Naive thymus-derived CD4-positive, alpha-beta T cell (primary cell): ENCODE measurements at regions of chr10 and their contacts with region 1.

Region 1: GRCh38 chr10:79195091-79195923 is 126.5 kb downstream of the ZMIZ1 start:
- DNase-seq: peak; percentile 49 to 80 (median 74)
- ATAC-seq: peak; percentile 89
- H3K4me3 ChIP-seq: no peak overlapping the region
- H3K4me3 Mint-ChIP-seq: no peak overlapping the region
- H3K27ac ChIP-seq: no peak overlapping the region
- H3K27ac Mint-ChIP-seq: no peak overlapping the region
- H3K4me1 ChIP-seq: peaks cover 0 to 3% of the 10 kb centered on the region in 2 donors
- H3K4me1 Mint-ChIP-seq: peaks cover 0 to 10% (median 5%) of the 10 kb centered on the region in 7 donors
- H3K27me3 ChIP-seq: no peaks in the 10 kb centered on the region
- H3K27me3 Mint-ChIP-seq: no peaks in the 10 kb centered on the region

Region 2: DNA sequence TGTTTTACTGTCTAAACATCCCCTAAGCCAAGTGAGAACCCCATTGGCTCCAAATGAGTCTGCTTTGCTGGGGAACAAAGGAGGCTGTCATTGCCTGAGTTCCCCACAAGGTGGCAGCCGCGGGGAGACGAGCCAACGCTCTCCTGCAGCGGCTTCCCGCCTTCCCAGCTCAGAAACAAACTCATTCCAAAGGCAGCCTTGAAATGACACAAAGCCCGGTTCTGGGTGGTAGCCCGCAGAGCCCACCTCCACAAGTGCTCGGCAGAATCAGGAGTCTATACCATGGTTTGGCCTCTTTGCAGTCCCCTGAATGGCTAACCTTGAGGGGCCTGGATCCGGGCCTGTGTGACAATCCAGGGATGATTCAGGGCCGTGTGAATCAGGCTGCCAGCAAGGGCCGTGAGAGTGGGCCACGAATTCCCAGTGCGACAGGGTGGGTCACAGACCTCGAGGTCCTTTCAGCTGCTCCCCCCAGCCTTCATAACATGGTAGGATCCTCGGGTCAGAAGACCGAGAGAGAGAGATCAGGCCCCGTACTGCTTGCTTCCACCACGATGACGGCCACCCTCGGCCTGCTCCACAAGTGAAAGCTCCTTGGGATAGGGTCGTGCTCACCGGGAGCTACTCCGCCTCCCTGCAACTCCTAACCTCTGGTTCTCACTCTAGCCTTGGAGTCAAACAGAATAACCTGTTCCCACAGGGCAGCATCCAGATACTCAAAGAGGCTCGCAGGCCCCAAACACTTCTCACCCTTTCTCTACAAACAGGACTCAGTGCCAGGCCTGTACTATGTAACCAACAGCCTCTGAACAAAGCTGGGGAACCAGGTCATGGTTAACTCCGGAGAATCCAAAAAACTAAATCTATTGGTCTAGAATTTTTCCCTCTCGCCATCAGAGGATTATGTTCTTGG is 1348.3 kb before region 1 on chr10:
- CTCF ChIA-PET with region 1: no interaction called
- POLR2A ChIA-PET with region 1: no interaction called
- intact Hi-C with region 1: loop called in 1 of 2 experiments (anchors 10 kb)
- DNase-seq: peak; percentile 14 to 71 (median 42)
- ATAC-seq: peak; percentile 83
- H3K4me3 ChIP-seq: no peak overlapping the region
- H3K4me3 Mint-ChIP-seq: no peak overlapping the region
- H3K27ac ChIP-seq: no peak overlapping the region
- H3K27ac Mint-ChIP-seq: no peak overlapping the region
- H3K4me1 ChIP-seq: no peaks in the 10 kb centered on the region
- H3K4me1 Mint-ChIP-seq: peaks cover 0 to 8% (median 0%) of the 10 kb centered on the region in 7 donors
- H3K27me3 ChIP-seq: no peaks in the 10 kb centered on the region
- H3K27me3 Mint-ChIP-seq: no peaks in the 10 kb centered on the region

Region 3: GRCh38 chr10:78211561-78212051 is 983.7 kb before region 1 on chr10:
- CTCF ChIA-PET with region 1: interaction called, 3 read pairs
- POLR2A ChIA-PET with region 1: no interaction called
- intact Hi-C with region 1: loop called in 1 of 2 experiments (anchors 1 kb)
- DNase-seq: peak in 1 of 9 donors; percentile 12
- ATAC-seq: no peak
- H3K4me3 ChIP-seq: no peak overlapping the region
- H3K4me3 Mint-ChIP-seq: no peak overlapping the region
- H3K27ac ChIP-seq: no peak overlapping the region
- H3K27ac Mint-ChIP-seq: no peak overlapping the region
- H3K4me1 ChIP-seq: no peaks in the 10 kb centered on the region
- H3K4me1 Mint-ChIP-seq: peaks cover 0 to 2% (median 0%) of the 10 kb centered on the region in 7 donors
- H3K27me3 ChIP-seq: no peaks in the 10 kb centered on the region
- H3K27me3 Mint-ChIP-seq: peaks cover 9 to 19% (median 15%) of the 10 kb centered on the region in 5 donors

Region 4: GRCh38 chr10:78424719-78425118 is 770.6 kb before region 1 on chr10:
- CTCF ChIA-PET with region 1: no interaction called
- POLR2A ChIA-PET with region 1: no interaction called
- intact Hi-C with region 1: loop called in 1 of 2 experiments (anchors 2 kb)
- DNase-seq: no peak
- ATAC-seq: no peak
- H3K4me3 ChIP-seq: no peak overlapping the region
- H3K4me3 Mint-ChIP-seq: no peak overlapping the region
- H3K27ac ChIP-seq: no peak overlapping the region
- H3K27ac Mint-ChIP-seq: no peak overlapping the region
- H3K4me1 ChIP-seq: no peaks in the 10 kb centered on the region
- H3K4me1 Mint-ChIP-seq: peaks cover 0 to 10% (median 0%) of the 10 kb centered on the region in 7 donors
- H3K27me3 ChIP-seq: no peaks in the 10 kb centered on the region
- H3K27me3 Mint-ChIP-seq: peaks cover 4 to 29% (median 16%) of the 10 kb centered on the region in 5 donors

Region 5: DNA sequence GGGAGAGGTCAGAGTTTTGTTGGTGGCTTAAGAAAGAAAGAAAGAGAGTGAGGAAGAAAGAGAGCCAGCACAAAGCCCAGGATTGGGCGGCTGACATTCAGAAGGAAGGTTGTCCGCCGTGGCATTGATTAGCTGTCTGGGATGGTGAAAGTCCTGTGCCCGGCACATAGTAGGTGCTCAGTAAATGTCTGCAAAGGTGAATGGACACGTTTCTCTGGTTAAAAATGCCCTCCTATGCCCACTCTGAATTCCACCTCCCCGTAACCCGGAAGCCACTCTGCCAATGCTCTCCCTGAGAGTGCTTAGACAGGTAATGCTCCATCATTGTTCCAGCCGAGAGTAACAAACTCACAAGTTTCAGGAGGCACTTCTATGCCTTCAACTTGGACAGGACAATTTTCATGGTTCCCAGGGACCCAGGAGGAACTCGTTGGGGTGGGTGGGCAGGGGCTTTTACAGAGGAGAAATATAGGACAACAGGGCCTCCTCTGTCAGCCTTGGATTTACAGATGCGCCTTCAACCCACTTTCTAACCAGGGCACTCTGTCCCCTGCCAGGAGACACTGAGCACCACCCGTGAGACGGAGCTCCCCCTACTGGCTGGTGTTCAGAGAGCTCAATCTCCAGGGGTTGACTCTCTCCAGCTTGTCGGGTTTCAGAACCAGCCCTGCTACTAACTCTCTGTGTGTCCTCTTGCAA is 538.0 kb before region 1 on chr10:
- CTCF ChIA-PET with region 1: interaction called, 3 read pairs
- POLR2A ChIA-PET with region 1: no interaction called
- intact Hi-C with region 1: loop called (anchors 1 to 2 kb)
- DNase-seq: peak; percentile 12 to 70 (median 53)
- ATAC-seq: peak; percentile 85
- H3K4me3 ChIP-seq: no peak overlapping the region
- H3K4me3 Mint-ChIP-seq: no peak overlapping the region
- H3K27ac ChIP-seq: no peak overlapping the region
- H3K27ac Mint-ChIP-seq: no peak overlapping the region
- H3K4me1 ChIP-seq: no peaks in the 10 kb centered on the region
- H3K4me1 Mint-ChIP-seq: peaks cover 0 to 1% (median 0%) of the 10 kb centered on the region in 7 donors
- H3K27me3 ChIP-seq: no peaks in the 10 kb centered on the region
- H3K27me3 Mint-ChIP-seq: peaks cover 7 to 25% (median 10%) of the 10 kb centered on the region in 5 donors

Region 6: GRCh38 chr10:78937800-78938694 is 257.3 kb before region 1 on chr10:
- CTCF ChIA-PET with region 1: interaction called, 6 read pairs
- POLR2A ChIA-PET with region 1: no interaction called
- intact Hi-C with region 1: loop called (anchors 1 to 5 kb)
- DNase-seq: peak in 2 of 9 donors; percentile 12 to 24
- ATAC-seq: peak; percentile 39
- H3K4me3 ChIP-seq: no peak overlapping the region
- H3K4me3 Mint-ChIP-seq: no peak overlapping the region
- H3K27ac ChIP-seq: no peak overlapping the region
- H3K27ac Mint-ChIP-seq: peak overlapping the region in 2 of 9 donors; percentile 54 to 72
- H3K4me1 ChIP-seq: no peaks in the 10 kb centered on the region
- H3K4me1 Mint-ChIP-seq: peaks cover 0 to 2% (median 0%) of the 10 kb centered on the region in 7 donors
- H3K27me3 ChIP-seq: no peaks in the 10 kb centered on the region
- H3K27me3 Mint-ChIP-seq: no peaks in the 10 kb centered on the region

Region 7: GRCh38 chr10:79367426-79368189 is 172.3 kb after region 1 on chr10:
- CTCF ChIA-PET with region 1: no interaction called
- POLR2A ChIA-PET with region 1: no interaction called
- intact Hi-C with region 1: no loop called
- DNase-seq: no peak
- ATAC-seq: peak; percentile 57
- H3K4me3 ChIP-seq: no peak overlapping the region
- H3K4me3 Mint-ChIP-seq: no peak overlapping the region
- H3K27ac ChIP-seq: no peak overlapping the region
- H3K27ac Mint-ChIP-seq: no peak overlapping the region
- H3K4me1 ChIP-seq: no peaks in the 10 kb centered on the region
- H3K4me1 Mint-ChIP-seq: no peaks in the 10 kb centered on the region
- H3K27me3 ChIP-seq: no peaks in the 10 kb centered on the region
- H3K27me3 Mint-ChIP-seq: peaks cover 0 to 76% (median 0%) of the 10 kb centered on the region in 5 donors

Region 8: DNA sequence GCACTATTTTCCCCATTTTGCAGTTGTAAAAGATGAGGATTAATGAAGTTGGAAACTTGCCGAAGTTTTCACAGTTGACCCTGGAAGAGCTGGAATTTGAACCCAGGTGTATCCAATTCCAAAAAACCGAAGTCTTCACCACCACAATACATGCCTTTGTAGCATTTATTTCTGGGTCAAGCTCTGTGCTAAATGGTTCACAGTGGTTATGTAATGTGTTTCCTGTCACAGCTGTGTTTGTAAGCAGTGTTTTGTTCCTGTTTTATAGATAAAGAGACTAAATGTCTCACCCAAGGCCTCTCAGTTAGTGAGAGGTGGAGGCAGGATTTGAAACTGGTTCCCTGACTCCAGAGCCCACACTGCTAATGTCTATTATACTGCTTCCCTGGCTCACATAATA is 347.3 kb after region 1 on chr10:
- CTCF ChIA-PET with region 1: no interaction called
- POLR2A ChIA-PET with region 1: no interaction called
- intact Hi-C with region 1: no loop called
- DNase-seq: no peak
- ATAC-seq: peak; percentile 50
- H3K4me3 ChIP-seq: no peak overlapping the region
- H3K4me3 Mint-ChIP-seq: no peak overlapping the region
- H3K27ac ChIP-seq: no peak overlapping the region
- H3K27ac Mint-ChIP-seq: peak overlapping the region in 1 of 9 donors; percentile 3
- H3K4me1 ChIP-seq: peaks cover 0 to 2% of the 10 kb centered on the region in 2 donors
- H3K4me1 Mint-ChIP-seq: peaks cover 4 to 50% (median 10%) of the 10 kb centered on the region in 7 donors
- H3K27me3 ChIP-seq: no peaks in the 10 kb centered on the region
- H3K27me3 Mint-ChIP-seq: no peaks in the 10 kb centered on the region